ENCODE measurements at regions of chr3 and their contacts with region 1.

Region 1: GRCh38 chr3:157130467-157131251 is 29.3 kb downstream of the CCNL1 start:
- DNase-seq: peak; percentile 85 to 96
- ATAC-seq: peak; percentile 82

Region 2: GRCh38 chr3:157088601-157089454 is 41.8 kb before region 1 on chr3:
- intact Hi-C with region 1: loop called in 1 of 2 experiments (anchors 5 kb)
- DNase-seq: peak; percentile 94 to 97
- ATAC-seq: peak; percentile 82

Region 3: DNA sequence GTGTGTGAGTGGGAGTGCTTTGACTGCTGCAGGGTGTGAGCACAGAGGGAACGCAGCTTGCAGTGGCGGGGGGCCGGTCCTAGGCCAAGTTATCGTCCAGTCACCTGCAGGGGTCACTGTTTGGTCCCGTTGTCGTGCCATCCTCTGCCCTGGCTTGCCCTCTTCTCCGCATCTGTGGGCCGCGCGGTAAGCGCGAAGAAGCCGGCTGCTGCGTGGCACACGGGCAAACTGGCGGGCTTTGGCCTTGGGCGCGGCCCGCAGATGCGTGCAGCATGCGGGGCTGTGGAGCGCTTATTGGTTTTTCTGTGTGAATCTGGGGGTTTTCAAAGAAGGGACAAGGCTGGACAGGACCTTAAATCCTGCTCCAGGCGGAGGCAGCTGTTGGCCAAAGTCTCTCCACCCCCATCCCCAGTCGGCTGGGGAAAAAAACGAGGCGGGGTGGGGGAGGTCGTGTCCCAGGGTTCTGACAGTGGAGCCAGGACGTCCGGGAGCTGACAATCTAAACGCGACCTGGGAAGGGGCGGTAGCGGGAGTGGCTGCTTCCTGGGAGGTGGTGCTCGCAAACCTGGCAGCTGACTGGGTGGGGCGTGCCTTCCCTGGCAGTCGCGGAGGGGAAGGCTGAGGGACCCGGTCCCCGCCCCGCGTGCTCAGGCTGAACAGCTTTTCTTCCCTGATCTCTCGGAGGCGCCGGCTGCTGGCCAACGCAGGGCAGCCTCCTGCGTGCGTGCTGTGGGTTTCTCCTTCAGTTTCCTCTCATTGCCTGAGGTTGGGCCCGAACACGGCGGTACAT is 412.2 kb after region 1 on chr3:
- intact Hi-C with region 1: no loop called
- DNase-seq: peak; percentile 82 to 86
- ATAC-seq: peak; percentile 99